Motor neuron (in vitro differentiated cells): ENCODE measurements at regions of chr1 and their contacts with region 1.

Region 1: GRCh38 chr1:66764994-66765578 is 12.8 kb downstream of the DYNLT5 start:
- ATAC-seq: peak in 3 of 8 experiments; percentile 60 to 75 (median 63)
- H3K4me3 ChIP-seq: no peak overlapping the region
- H3K27ac ChIP-seq: no peak overlapping the region
- H3K4me1 ChIP-seq: no peaks in the 10 kb centered on the region

Region 2: DNA sequence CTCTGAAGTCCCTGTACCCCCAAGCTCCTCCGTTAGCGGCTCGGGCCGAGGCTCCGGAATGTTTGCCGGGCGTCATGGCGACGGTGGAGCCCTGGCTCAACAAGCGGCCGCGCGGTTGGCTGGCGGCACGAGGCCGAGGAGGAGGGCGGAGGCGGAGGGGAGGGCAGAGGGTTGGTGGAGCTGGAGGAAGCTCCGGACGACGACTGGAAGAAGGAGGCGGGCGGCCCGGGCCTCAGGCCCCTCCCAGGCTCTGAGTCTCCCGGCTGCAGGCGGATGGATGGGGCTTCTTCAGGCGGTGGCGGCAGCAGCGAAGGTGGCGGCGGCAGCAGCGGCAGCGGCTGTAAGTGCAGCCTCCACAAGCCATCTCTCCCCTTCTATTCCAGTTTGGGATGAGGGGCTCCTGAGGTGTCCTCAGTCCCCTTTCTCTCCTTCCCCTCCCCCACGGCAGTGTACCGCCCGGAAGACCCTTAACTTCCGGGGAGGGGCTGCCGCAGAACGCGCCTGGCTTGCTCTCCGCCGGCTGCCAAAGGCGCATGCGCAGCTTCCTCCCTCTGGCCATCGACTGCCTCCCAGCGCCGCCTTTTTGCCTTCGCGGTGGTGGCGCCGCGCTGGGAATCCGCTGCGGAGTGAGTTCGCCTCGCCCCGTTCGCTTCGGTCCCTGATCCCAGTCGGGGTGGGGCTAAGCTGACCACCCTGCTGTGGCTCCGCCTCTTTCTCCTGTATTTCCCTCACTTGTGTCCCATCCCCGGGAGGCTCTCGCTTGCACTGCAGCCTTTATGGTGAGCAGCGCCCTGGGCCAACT is 159.9 kb after region 1 on chr1 and contains the starts of genes DNAI4 and MIER1:
- in situ Hi-C with region 1: loop called in 1 of 9 experiments (anchors 25 kb)
- ATAC-seq: peak; percentile 86 to 90 (median 88)
- H3K4me3 ChIP-seq: peak within 1 kb of the TSS; percentile 65 to 81 (median 78)
- H3K27ac ChIP-seq: peak within 1 kb of the TSS; percentile 97
- H3K4me1 ChIP-seq: peaks cover 9 to 21% of the 10 kb centered on the region in 2 donors
- total RNA-seq, gene DNAI4: 3.6 to 69.8 (median 11.3) TPM
- total RNA-seq, gene MIER1: 23.2 to 51.6 (median 28.6) TPM

Region 3: DNA sequence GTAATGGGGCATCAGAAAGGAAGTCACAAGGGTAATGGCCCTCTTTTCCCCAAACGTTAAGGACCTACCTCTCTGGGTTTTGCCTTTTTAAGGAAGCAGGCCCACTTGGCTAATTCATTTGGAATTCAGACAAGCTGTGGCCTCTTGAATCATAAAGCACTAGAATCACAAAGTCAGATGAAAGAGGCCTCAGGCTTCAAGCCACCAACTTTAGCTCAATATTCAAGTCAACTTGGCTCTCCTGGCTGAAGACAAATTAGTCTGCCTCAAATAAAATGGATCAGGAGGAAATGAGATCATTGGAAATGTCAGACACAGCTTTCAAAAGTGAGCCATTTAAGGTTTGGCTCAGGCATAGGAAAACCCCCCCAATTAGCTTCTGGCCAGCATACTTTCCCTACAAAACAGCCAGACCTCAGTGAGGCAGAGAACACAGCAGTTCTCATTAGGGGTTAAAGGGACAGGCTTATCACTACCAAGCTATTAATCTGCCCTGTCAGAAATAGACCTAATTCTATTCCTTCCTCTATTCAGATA is 254.6 kb after region 1 on chr1:
- in situ Hi-C with region 1: no loop called
- ATAC-seq: peak in 2 of 8 experiments; percentile 20 to 44
- H3K4me3 ChIP-seq: no peak overlapping the region
- H3K27ac ChIP-seq: no peak overlapping the region
- H3K4me1 ChIP-seq: no peaks in the 10 kb centered on the region

Region 4: DNA sequence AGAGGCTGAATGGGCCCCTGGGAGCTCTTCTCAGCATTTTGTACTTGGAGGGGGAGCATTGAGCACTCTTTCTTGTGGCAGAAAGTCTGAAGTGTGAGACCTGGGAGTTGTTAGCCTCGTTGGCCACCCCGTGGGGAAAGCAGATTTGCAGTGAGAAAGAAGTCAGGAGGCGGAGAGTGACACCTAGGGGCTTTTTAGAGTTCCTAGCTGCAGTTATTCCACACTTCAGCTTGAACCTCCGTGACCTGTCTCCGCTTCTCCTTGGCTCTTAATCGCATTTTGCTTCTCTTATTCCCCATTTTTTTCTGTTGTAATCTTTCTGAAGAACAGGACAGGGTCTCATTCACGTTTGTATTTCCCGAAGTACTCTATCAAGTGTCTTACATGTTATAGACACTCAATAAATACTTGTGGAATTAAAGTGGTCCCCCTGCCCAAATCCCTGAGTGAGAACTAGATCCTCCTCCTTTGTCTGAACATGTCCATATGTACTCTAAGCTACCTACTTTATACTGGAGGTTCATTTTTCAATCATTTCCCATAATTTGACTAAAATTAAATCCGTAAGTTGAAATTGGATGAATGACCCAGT is 384.2 kb after region 1 on chr1:
- in situ Hi-C with region 1: loop called in 4 of 9 experiments (anchors 25 kb)
- ATAC-seq: peak in 6 of 8 experiments; percentile 53 to 100 (median 93)
- H3K4me3 ChIP-seq: no peak overlapping the region
- H3K27ac ChIP-seq: no peak overlapping the region
- H3K4me1 ChIP-seq: no peaks in the 10 kb centered on the region

Region 5: DNA sequence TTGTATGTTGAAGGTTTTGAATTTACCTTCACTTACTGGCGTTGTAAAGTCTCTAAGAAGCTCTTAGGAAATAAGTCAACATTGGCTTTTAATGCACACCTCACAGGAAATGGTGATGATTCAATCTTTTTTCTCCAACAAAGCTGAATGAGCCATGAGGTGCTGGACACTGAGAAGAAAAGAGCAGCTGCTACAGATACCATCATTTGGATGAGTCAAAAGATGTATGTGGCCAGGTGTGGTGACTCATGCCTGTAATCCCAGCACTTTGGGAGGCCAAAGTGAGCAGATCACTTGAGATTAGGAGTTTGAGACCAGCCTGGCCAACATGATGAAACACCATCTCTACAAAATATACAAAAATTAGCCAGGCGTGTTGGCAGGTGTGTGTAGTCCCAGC is 397.9 kb after region 1 on chr1:
- in situ Hi-C with region 1: loop called in 1 of 9 experiments (anchors 25 kb)
- ATAC-seq: no peak
- H3K4me3 ChIP-seq: no peak overlapping the region
- H3K27ac ChIP-seq: no peak overlapping the region
- H3K4me1 ChIP-seq: no peaks in the 10 kb centered on the region